Activated B cell treated with CpG ODN at 0.5 μM for 24 hours (primary cell): ENCODE measurements at regions of chr1 and their contacts with region 1.

Region 1: DNA sequence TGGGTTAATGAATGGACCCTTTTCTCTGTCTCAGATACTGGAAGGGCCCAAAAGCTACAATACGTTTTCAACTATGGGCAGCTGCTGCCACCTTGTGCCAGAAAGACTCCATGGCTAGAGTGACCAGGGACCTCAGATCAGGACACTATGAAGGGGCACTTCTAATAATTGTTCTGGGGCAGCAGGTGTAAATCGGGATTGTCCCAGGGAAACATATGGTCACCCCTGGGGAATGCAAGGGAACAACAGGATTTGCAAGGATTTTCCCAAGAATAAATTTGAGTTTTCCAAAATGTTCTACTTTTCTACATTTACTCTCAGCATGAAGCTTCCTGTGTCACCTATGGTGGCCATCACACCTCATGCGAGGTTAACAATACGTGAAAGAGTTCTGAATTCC is 12.0 kb upstream of the FCAMR start:
- DNase-seq: peak; percentile 52
- ATAC-seq: peak; percentile 91
- H3K4me3 Mint-ChIP-seq: no peak overlapping the region
- H3K27ac Mint-ChIP-seq: no peak overlapping the region
- H3K4me1 Mint-ChIP-seq: no peaks in the 10 kb centered on the region
- H3K27me3 Mint-ChIP-seq: peaks cover 5% of the 10 kb centered on the region
- CTCF ChIP-seq: no peak

Region 2: DNA sequence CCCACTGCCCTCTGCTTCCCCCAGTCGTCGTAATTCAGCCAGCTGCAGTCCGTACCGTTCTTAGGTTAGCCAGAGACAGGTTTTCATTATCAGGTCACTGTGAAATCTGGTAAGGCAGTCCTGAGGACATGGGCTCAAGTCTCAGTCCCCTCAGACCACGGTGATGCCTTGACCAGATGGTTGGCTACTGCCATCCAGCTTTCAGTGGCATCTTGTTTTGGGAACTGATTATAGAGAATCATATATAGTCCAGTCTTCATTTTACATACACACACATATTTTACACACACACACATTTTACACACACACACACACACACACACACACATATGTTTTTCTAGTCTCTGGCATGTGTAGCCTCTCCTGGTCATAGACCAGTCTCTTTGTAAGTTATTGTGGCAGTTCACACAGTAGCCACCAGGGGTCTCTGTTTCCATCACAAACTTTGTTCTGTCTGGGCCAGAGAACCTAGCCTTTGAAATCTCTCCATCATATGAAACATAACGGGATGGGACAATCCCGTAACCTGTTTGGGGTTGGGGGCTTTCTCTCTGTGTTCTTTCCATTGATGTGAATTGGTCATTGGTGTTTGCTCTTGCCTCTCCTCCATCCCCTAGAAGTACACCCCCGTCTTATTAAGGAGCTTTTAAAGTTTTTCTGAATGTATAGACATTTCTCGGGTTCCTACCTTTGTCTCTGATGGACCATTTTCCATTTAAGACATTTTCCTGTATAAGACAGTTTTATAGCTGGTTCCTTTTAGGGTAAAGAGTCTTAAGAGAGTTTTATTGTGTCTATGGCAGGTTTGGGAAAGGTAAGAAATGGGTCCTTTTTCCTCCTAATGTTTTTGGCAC is 520.4 kb before region 1 on chr1:
- CTCF ChIA-PET with region 1: interaction called, 4 read pairs
- POLR2A ChIA-PET with region 1: no interaction called
- intact Hi-C with region 1: loop called (anchors 5 kb)
- DNase-seq: no peak
- ATAC-seq: peak; percentile 87
- H3K4me3 Mint-ChIP-seq: no peak overlapping the region
- H3K27ac Mint-ChIP-seq: no peak overlapping the region
- H3K4me1 Mint-ChIP-seq: peaks cover 17% of the 10 kb centered on the region
- H3K27me3 Mint-ChIP-seq: no peaks in the 10 kb centered on the region
- CTCF ChIP-seq: no peak

Region 3: GRCh38 chr1:206635080-206635977 is 346.9 kb before region 1 on chr1 and contains the start of gene DYRK3:
- CTCF ChIA-PET with region 1: interaction called, 125 read pairs
- POLR2A ChIA-PET with region 1: interaction called, 6 read pairs
- intact Hi-C with region 1: loop called (anchors 1 kb)
- DNase-seq: peak; percentile 86
- ATAC-seq: peak; percentile 91
- H3K4me3 Mint-ChIP-seq: peak within 1 kb of the TSS; percentile 89
- H3K27ac Mint-ChIP-seq: peak within 1 kb of the TSS; percentile 76
- H3K4me1 Mint-ChIP-seq: peaks cover 24% of the 10 kb centered on the region
- H3K27me3 Mint-ChIP-seq: peaks cover 2% of the 10 kb centered on the region
- CTCF ChIP-seq: no peak
- total RNA-seq, gene DYRK3: 0.33 and 0.37 TPM in 2 replicates

Region 4: DNA sequence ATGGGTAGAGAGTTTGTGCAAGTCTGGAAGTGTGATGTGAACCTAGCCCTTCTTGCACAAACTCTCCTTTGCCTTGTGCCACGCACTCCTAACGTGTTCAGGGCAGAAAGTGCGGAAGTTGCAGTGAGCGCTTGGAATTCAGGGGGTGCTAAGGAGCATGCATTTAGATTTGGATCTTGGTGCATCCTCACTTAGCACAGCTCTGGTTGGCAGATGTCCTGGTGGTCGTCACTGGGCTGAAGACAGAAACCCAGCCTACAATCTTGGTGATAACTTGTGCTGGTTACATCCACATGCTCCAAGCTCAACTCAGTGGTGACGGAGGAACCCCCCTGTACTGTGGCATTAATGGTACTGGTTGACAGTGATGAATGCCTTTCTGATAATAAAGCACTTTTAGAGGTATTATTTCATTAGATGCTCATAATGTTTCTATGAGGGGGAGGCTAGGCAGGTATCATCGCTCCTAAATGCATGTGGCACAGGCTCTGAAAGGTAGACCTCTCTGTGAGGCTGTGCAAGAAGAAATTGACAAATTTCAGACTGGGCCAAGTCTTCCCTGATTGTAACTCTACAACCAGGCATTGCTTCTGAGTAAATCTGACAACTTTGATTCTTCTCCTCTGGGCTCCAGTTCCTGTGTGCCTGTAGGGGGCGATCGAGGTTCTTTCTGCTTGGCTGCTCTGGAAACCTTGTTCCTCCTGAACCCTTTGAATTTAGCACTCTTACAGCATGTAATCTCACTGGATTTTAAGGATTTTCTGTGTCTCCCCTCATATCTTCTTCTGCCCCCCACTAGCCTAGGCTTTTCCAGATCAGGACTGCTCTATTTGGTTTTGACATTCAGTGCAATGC is 256.9 kb before region 1 on chr1:
- CTCF ChIA-PET with region 1: interaction called, 40 read pairs
- POLR2A ChIA-PET with region 1: no interaction called
- intact Hi-C with region 1: loop called (anchors 1 kb)
- DNase-seq: no peak
- ATAC-seq: peak; percentile 63
- H3K4me3 Mint-ChIP-seq: no peak overlapping the region
- H3K27ac Mint-ChIP-seq: peak overlapping the region; percentile 63
- H3K4me1 Mint-ChIP-seq: peaks cover 48% of the 10 kb centered on the region
- H3K27me3 Mint-ChIP-seq: no peaks in the 10 kb centered on the region
- CTCF ChIP-seq: no peak

Region 5: GRCh38 chr1:206814716-206815341 is 167.4 kb before region 1 on chr1:
- CTCF ChIA-PET with region 1: interaction called, 89 read pairs
- POLR2A ChIA-PET with region 1: interaction called, 5 read pairs
- intact Hi-C with region 1: no loop called
- DNase-seq: no peak
- ATAC-seq: peak; percentile 69
- H3K4me3 Mint-ChIP-seq: peak overlapping the region; percentile 44
- H3K27ac Mint-ChIP-seq: peak overlapping the region; percentile 73
- H3K4me1 Mint-ChIP-seq: peaks cover 47% of the 10 kb centered on the region
- H3K27me3 Mint-ChIP-seq: no peaks in the 10 kb centered on the region
- CTCF ChIP-seq: no peak

Region 6: DNA sequence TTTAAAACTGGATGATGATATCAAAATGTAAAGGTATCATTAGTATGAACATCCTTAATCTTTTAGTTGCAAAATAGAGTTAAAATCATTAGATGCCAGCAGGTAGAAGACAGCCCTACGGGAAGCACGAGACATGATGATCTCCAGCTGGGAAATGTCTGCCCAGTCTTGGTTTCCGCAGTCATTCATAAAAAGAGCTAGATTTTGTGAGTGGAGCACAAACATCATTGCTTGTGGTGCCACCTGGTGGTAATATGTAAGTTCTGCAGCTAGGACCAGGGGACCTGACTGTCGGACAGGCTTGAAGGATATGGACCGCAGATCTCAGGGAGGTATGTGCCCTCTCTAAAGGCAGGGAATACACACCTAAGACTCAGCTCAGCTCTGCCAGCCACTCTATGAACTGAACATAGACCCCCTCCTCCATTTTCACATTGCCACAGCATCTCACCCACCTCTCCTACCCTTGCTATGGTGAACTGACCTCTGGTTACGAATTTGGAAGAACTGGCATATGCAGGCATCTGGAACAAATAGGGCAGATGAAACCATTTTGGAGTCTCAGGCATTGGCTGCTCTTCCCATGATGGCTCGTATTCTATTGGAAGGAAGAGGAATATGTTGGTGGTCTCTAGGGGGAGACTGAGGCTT is 69.6 kb before region 1 on chr1:
- CTCF ChIA-PET with region 1: interaction called, 79 read pairs
- POLR2A ChIA-PET with region 1: no interaction called
- intact Hi-C with region 1: loop called (anchors 1 kb)
- DNase-seq: no peak
- ATAC-seq: peak; percentile 54
- H3K4me3 Mint-ChIP-seq: peak overlapping the region; percentile 42
- H3K27ac Mint-ChIP-seq: no peak overlapping the region
- H3K4me1 Mint-ChIP-seq: peaks cover 93% of the 10 kb centered on the region
- H3K27me3 Mint-ChIP-seq: no peaks in the 10 kb centered on the region
- CTCF ChIP-seq: peak; percentile 72

Region 7: GRCh38 chr1:206967096-206967849 is 14.9 kb before region 1 on chr1:
- CTCF ChIA-PET with region 1: interaction called, 26 read pairs
- POLR2A ChIA-PET with region 1: no interaction called
- intact Hi-C with region 1: no loop called
- DNase-seq: no peak
- ATAC-seq: peak; percentile 25
- H3K4me3 Mint-ChIP-seq: no peak overlapping the region
- H3K27ac Mint-ChIP-seq: no peak overlapping the region
- H3K4me1 Mint-ChIP-seq: peaks cover 27% of the 10 kb centered on the region
- H3K27me3 Mint-ChIP-seq: peaks cover under 1% of the 10 kb centered on the region
- CTCF ChIP-seq: no peak